ENCODE measurements at regions of chr1 and their contacts with region 1.

Region 1: GRCh38 chr1:51519048-51519864 is at the start of gene EPS15:
- DNase-seq: peak; percentile 87
- H3K4me3 Mint-ChIP-seq: peak within 1 kb of the TSS; percentile 79
- H3K27ac Mint-ChIP-seq: peak within 1 kb of the TSS; percentile 93
- H3K4me1 Mint-ChIP-seq: peaks cover 17% of the 10 kb centered on the region
- H3K27me3 Mint-ChIP-seq: no peaks in the 10 kb centered on the region
- CTCF ChIP-seq: no peak
- total RNA-seq, gene EPS15: 48.2 and 48.7 TPM in 2 replicates

Region 2: GRCh38 chr1:51506537-51506936 is 12.7 kb before region 1 on chr1:
- CTCF ChIA-PET with region 1: interaction called, 5 read pairs
- POLR2A ChIA-PET with region 1: interaction called, 25 read pairs
- intact Hi-C with region 1: no loop called
- DNase-seq: peak; percentile 62
- H3K4me3 Mint-ChIP-seq: peak overlapping the region; percentile 35
- H3K27ac Mint-ChIP-seq: peak overlapping the region; percentile 40
- H3K4me1 Mint-ChIP-seq: peaks cover 7% of the 10 kb centered on the region
- H3K27me3 Mint-ChIP-seq: no peaks in the 10 kb centered on the region
- CTCF ChIP-seq: no peak

Measured in MCF 10A (cell line).